Activated CD4-positive, alpha-beta memory T cell treated with anti-CD3 and anti-CD28 coated beads for 36 hours (primary cell): ENCODE measurements at regions of chr2 and their contacts with region 1.

Region 1: DNA sequence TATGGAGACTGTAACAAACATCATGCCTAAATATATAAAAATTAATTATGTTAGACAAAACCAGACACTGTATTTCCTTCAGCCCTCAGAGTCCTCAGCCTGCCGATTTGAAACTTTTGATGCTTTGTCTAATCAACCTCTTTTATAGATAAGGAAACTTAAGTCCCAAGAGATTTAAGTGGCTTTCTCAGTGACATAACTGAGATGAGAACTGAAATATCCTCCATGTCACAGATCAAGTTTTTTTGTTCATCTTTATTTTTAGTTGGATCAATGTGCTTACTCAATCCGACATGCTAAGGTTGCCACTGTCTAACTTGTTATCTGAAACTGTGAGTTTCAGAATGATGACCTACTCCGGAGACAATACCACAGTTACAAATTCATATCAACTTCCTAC is 72.3 kb downstream of the BARD1 start:
- DNase-seq: no peak
- H3K4me3 Mint-ChIP-seq: no peak overlapping the region
- H3K27ac Mint-ChIP-seq: no peak overlapping the region
- H3K4me1 Mint-ChIP-seq: peaks cover 5% of the 10 kb centered on the region
- H3K27me3 Mint-ChIP-seq: no peaks in the 10 kb centered on the region

Region 2: GRCh38 chr2:214750529-214750928 is 13.3 kb after region 1 on chr2:
- CTCF ChIA-PET with region 1: no interaction called
- POLR2A ChIA-PET with region 1: no interaction called
- intact Hi-C with region 1: loop called (anchors 2 kb)
- DNase-seq: no peak
- H3K4me3 Mint-ChIP-seq: no peak overlapping the region
- H3K27ac Mint-ChIP-seq: no peak overlapping the region
- H3K4me1 Mint-ChIP-seq: no peaks in the 10 kb centered on the region
- H3K27me3 Mint-ChIP-seq: no peaks in the 10 kb centered on the region

Region 3: DNA sequence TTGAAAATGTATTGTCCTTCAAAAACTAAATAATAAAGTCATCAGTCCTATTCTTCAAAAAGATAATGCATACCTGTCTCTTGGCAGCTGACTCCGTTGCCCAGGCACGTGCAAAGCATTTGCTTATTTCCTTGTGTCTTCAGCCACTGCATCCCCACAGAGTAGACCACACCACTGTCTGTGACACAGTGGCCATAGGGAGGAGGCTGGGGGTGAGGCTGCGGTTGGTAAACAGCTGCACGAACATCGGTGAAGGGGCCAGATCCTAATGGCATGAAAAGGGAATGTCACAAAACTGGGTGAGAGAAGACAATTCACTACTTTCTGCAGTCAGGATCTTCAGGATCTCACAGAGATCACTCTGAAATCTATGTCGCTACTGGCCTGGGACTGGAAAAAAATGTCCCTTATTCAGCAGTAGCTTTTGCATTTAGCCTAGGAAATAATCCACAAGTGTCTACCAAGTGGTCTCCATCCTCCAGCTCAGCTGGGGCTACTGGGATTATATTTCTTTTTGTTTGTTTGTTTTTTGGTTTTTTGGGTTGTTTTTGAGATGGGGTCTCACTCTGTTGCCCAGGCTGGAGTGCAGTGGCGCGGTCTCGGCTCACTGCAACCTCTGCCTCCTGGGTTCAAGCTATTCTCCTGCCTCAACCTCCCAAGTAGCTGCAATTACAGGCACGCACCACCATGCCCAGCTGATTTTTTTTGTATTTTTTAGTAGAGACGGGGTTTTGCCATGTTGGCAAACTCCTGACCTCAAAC is 688.0 kb after region 1 on chr2:
- CTCF ChIA-PET with region 1: no interaction called
- POLR2A ChIA-PET with region 1: no interaction called
- intact Hi-C with region 1: no loop called
- DNase-seq: no peak
- H3K4me3 Mint-ChIP-seq: no peak overlapping the region
- H3K27ac Mint-ChIP-seq: no peak overlapping the region
- H3K4me1 Mint-ChIP-seq: no peaks in the 10 kb centered on the region
- H3K27me3 Mint-ChIP-seq: peaks cover 25% of the 10 kb centered on the region

Region 4: DNA sequence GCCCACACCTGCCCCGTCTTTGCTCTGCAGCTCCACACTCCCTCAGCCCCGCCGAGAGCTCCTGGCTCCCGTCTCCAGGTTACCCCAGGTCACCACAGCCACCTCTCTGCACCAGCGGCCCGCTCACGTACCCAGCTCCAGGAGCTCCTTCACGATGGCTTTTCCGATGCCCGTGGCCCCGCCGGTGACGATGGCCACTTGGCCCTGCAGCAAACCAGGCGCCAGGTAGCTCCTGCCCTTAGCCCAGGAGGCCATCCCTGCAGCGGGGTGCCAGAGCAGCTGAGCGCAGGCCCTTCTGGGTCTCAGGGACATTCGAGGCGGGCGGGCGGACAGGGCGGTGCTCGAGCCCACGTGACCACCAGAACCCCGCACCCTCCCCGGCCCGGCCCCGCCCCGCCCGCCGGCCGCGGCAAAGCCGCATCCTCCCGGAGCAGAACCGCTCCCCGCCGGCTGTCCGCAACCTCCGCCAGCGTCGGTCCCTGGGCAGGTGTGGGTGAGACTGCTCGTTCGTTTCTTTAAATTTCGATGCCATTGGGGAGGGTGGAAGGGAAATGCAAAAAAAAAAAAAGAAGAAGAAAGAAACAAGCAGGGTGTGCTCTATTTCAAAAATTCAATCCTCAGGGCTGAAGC is 1344.4 kb after region 1 on chr2 and contains the starts of genes PECR and TMEM169:
- CTCF ChIA-PET with region 1: no interaction called
- POLR2A ChIA-PET with region 1: no interaction called
- intact Hi-C with region 1: no loop called
- DNase-seq: peak; percentile 87
- H3K4me3 Mint-ChIP-seq: peak within 1 kb of the TSS; percentile 96
- H3K27ac Mint-ChIP-seq: peak within 1 kb of the TSS; percentile 81
- H3K4me1 Mint-ChIP-seq: peaks cover 51% of the 10 kb centered on the region
- H3K27me3 Mint-ChIP-seq: no peaks in the 10 kb centered on the region
- total RNA-seq, gene PECR: 23.3 to 27.6 TPM
- total RNA-seq, gene TMEM169: 2.0 to 2.7 TPM